GM10248 (cell line): ENCODE measurements at regions of chr14 and their contacts with region 1.

Region 1: GRCh38 chr14:75497191-75497590 is 25.1 kb upstream of the BATF start:
- DNase-seq: peak; percentile 65
- CTCF ChIP-seq: peak; percentile 14

Region 2: GRCh38 chr14:75344411-75344810 is 152.8 kb before region 1 on chr14:
- CTCF ChIA-PET with region 1: no interaction called
- POLR2A ChIA-PET with region 1: no interaction called
- DNase-seq: no peak
- CTCF ChIP-seq: no peak

Region 3: DNA sequence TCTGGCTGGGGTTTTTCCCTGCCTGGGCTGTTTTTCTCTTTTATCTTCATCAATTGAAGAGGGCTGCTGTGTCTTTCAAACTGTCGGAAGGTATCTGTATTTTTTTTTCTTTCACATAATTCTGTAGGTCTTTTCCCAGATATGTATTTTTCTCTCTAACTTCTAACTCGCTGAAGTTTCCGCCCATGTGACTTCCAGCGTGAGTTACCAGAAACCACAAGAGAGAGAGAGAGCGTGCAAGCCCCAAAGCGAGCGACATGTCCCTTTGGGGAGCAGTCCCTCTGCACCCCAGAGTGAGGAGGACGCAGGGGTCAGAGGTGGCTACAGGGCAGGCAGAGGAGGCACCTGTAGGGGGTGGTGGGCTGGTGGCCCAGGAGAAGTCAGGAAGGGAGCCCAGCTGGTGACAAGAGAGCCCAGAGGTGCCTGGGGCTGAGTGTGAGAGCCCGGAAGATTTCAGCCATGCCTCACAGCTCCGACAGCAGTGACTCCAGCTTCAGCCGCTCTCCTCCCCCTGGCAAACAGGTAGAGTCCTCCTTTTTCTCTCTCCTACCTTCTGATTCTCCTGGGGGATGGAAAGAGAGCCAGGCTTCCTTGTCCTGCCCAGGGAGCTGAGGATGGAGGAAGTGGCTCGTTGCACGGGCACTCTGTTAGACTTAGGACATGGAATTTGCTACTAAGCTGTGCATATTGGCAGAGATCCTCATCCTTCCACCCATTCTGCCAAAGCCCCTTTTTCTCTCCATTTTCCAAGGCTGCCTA is 25.2 kb after region 1 on chr14 and contains the start of gene BATF:
- CTCF ChIA-PET with region 1: interaction called, 97 read pairs
- POLR2A ChIA-PET with region 1: interaction called, 4 read pairs
- DNase-seq: peak; percentile 77
- CTCF ChIP-seq: no peak

Region 4: GRCh38 chr14:75769047-75769685 is 272.0 kb after region 1 on chr14:
- CTCF ChIA-PET with region 1: no interaction called
- POLR2A ChIA-PET with region 1: no interaction called
- DNase-seq: peak; percentile 10
- CTCF ChIP-seq: no peak